Posterior cingulate gyrus (tissue), 11 donors: ENCODE measurements at regions of chr5 and their contacts with region 1.

Region 1: GRCh38 chr5:139517683-139518564 is 35.4 kb upstream of the STING1 start:
- DNase-seq: peak; percentile 84 to 99 (median 92)

Region 2: GRCh38 chr5:139422307-139422893 is 95.5 kb before region 1 on chr5:
- intact Hi-C with region 1: loop called (anchors 1 kb)
- DNase-seq: no peak

Region 3: GRCh38 chr5:139439013-139439903 is 78.7 kb before region 1 on chr5 and contains the start of gene DNAJC18:
- intact Hi-C with region 1: loop called (anchors 5 kb)
- DNase-seq: peak; percentile 95 to 100 (median 98)

Region 4: GRCh38 chr5:139560752-139561654 is 43.1 kb after region 1 on chr5 and contains the start of gene UBE2D2:
- intact Hi-C with region 1: loop called (anchors 1 kb)
- DNase-seq: peak; percentile 93 to 99 (median 96)